HEK293 (cell line): ENCODE measurements at regions of chr9 and their contacts with region 1.

Region 1: DNA sequence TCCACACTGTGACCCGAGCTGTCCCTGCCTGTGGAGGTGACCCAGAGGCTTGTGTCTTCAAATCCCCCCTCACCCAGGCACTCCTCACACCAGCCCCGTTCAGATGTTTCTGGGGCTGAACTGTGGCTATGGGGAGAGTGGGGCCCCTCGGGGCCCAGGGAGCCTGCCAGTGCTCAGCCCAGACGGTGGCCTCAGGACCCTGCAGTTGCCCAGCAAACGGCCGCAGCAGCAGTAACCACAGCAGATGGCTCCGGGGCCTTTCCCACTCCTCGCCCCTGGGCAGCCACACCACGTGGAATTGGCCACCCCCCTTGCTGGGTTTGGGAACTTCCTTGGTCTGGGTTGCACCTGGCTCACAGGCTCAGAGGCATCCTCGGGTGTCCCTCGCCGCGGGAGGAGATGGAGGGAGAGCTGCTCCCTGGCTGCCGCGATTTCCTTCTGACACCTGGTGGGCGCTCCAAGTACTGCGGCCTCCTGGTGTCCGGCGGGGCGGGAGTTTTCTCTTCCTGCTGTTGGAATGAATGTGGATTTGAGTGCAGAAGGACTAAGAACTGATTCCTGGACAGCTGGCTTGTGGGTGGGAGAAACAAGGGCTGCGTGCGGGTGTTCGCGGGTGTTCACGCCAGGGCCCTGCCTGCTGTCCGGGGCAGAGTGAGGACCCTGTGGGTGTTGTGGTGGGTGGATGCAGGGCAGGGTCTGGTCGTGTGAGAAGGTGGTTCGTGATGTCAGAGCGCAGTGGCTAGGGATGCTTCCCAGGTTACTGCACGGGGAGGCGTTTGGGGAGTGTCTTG is 97.5 kb downstream of the COL5A1 start:
- H3K4me3 ChIP-seq: no peak overlapping the region
- H3K27ac ChIP-seq: no peak overlapping the region
- H3K4me1 ChIP-seq: 0 out of 2 replicates have a peak, but pooled peaks cover 2% of the 10 kb centered on the region
- CTCF ChIP-seq: peak; percentile 89

Region 2: DNA sequence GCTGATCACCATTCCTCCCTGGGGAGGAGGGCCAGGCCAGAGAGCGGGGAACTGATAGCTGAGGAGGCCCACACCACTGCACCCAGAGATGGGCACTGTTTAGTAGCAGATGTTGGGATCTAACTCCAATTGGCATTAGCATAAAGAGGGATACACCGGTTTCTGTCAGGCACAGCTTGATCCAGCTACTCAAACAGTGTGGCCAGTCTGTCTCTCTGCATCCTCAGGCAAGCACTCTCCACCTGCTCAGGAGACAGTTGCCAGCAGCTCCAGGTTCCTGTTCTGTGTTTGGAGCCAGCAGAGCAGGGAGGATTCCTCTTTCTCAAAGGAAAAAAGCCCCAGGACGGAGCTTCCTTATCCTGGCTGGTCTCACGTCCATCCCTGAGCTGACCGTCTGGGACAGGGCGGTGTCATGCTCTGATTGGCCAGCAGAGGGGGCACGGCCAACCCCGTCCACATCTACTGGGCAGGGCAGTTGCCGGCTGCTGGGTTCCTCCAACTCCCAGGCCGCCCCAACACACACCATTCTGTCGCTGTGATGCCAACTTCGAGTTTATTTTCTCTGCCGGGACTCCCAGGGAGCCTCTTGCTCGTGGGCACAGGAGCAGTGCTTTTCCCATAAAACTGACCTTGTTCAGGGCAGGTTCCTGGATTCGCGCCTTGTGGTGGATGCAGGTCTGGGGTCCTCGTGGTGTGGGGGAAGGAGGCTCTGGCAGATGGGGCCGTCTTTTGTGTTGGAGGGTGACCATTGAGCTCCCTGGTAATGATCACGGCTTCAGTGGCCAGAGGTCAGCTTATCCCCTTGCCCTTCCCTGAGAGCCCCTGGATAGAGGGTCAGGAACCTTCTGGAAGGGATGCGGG is 49.5 kb before region 1 on chr9:
- CTCF ChIA-PET with region 1: interaction called, 64 read pairs
- POLR2A ChIA-PET with region 1: interaction called, 4 read pairs
- H3K4me3 ChIP-seq: no peak overlapping the region
- H3K27ac ChIP-seq: no peak overlapping the region
- H3K4me1 ChIP-seq: no peaks in the 10 kb centered on the region
- CTCF ChIP-seq: peak; percentile 67

Region 3: DNA sequence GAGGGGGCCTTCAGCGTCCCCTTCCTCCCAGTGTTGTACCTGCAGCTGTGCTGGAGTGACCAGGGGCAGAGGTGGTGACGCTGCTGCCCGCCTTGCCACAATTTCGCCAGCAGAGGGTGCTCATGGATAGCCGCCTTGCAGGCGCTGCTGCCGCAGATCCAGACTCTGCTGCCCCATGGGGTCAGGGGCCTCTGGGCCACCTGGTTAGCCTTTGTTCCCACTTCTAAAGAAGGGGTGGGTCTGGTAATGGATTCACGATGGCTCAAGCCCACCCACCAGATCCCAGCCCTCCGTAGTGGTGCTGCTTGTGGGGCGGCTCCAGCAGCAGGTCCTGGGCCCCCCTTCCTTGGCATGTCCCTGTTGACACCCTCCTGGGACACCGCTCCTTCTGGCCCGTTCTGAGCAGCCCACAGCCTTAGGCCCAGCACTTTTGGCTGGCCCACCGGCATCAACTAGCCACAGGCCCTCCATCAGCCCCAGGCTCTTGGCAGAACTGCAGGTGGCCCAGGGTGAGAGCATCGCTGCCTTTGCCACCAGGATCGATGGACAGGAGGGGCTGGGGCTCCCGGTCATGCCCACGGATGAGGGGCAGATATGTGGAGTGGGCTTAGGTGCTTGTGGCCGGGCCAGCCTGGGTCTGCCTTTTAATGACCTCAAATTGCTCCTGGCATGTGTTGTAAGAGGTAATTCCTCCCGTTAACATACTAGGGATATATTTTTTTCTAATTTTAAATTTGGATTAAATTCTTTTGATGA is 40.3 kb before region 1 on chr9:
- CTCF ChIA-PET with region 1: interaction called, 64 read pairs
- POLR2A ChIA-PET with region 1: no interaction called
- H3K4me3 ChIP-seq: no peak overlapping the region
- H3K27ac ChIP-seq: no peak overlapping the region
- H3K4me1 ChIP-seq: no peaks in the 10 kb centered on the region
- CTCF ChIP-seq: peak; percentile 91; the same call in 1 of the 2 replicates

Region 4: DNA sequence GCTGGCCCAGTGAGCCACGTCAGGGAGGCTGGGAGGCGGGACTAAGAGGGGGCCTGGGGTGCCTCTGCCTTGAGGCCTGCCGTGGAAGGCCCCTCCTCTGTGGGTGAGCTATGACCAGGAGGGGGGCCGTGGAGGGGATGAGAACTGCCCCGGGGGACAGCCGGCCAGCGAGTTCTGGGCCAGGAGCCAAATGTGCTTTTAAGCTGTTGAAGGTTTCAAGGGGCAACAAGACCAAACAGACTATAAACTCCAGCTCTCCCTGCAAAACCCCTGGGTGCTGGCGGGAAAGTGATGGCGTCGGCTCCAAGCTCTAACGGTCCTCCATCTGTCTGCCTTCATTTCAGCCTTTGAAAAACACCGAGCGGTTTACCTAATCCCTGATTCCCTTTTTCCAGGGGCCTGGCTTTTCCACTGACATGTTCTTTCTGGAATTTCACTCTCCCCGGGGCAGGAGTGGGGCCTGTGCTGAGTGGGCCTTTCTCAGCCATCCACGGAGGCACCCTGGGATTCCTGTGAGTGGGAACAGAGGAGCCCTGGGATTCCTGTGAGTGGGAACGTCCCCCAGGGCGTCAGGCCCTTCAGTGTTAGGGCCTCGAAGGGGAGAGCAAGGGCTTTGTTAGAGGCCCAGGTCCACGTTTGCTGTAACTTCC is 31.9 kb before region 1 on chr9:
- CTCF ChIA-PET with region 1: interaction called, 33 read pairs
- POLR2A ChIA-PET with region 1: interaction called, 17 read pairs
- H3K4me3 ChIP-seq: no peak overlapping the region
- H3K27ac ChIP-seq: peak overlapping the region; percentile 55
- H3K4me1 ChIP-seq: peaks cover 5% of the 10 kb centered on the region; the same call in 1 of the 2 replicates
- CTCF ChIP-seq: no peak